ENCODE measurements at regions of chr2 and their contacts with region 1.

Region 1: GRCh38 chr2:6922201-6922685 is 5.0 kb downstream of the RNF144A start:
- DNase-seq: no peak
- H3K4me3 ChIP-seq: no peak overlapping the region
- H3K27ac ChIP-seq: no peak overlapping the region
- H3K4me1 ChIP-seq: peaks cover 4% of the 10 kb centered on the region
- H3K27me3 ChIP-seq: no peaks in the 10 kb centered on the region
- CTCF ChIP-seq: peak in 3 of 4 experiments; percentile 14 to 41 (median 16)
- POLR2A ChIP-seq: no peak

Region 2: GRCh38 chr2:6957910-6958615 is 35.8 kb after region 1 on chr2:
- intact Hi-C with region 1: loop called (anchors 5 kb)
- DNase-seq: peak; percentile 2
- H3K4me3 ChIP-seq: no peak overlapping the region
- H3K27ac ChIP-seq: no peak overlapping the region
- H3K4me1 ChIP-seq: peaks cover 3% of the 10 kb centered on the region
- H3K27me3 ChIP-seq: no peaks in the 10 kb centered on the region
- CTCF ChIP-seq: no peak
- POLR2A ChIP-seq: no peak

Region 3: GRCh38 chr2:7014174-7014640 is 92.0 kb after region 1 on chr2:
- intact Hi-C with region 1: loop called (anchors 10 kb)
- DNase-seq: no peak
- H3K4me3 ChIP-seq: no peak overlapping the region
- H3K27ac ChIP-seq: no peak overlapping the region
- H3K4me1 ChIP-seq: peaks cover under 1% of the 10 kb centered on the region
- H3K27me3 ChIP-seq: no peaks in the 10 kb centered on the region
- CTCF ChIP-seq: no peak
- POLR2A ChIP-seq: no peak